GM23248 (cell line): ENCODE measurements at regions of chr14 and their contacts with region 1.

Region 1: DNA sequence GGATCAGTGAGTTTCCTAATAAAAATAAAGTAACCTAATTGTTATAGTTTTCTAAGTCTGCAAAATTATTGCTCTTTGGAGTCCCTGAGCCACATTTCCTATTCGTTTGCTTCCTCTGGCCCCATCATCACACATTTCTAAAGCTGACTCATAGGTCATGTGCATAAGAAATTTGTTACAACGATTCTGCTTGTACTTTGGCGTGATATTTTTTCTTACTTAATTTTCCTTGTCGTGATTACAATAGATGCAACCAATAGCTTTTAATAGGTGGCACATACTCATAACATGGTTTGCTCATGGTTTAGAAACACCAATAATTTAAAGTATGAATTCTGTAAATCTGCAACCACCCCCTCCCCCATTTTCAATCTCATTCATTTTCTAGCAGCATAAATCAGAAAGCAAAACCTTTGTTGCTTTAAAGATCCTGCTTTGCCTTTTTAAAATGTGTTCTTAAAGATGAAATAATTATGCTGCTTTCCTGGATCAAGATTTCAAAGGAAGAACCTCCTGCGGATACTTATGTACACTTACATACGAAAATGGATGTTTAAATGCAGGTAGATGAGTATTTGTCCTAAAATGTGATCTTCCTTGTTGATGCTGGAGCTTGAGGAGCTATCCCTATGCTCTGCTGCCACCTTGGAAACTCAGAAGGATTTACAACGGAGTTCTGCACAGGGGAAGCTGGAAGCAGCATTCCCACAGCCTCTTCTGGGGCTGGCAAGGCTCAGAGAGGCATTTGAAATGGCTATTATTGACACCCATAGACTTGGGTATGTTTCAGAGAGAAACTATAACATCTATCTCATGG is 1.7 kb upstream of the FLRT2 start:
- DNase-seq: peak; percentile 89
- H3K4me3 ChIP-seq: peak overlapping the region; percentile 96
- H3K27ac ChIP-seq: peak overlapping the region; percentile 87
- H3K4me1 ChIP-seq: peaks cover 17% of the 10 kb centered on the region
- H3K27me3 ChIP-seq: no peaks in the 10 kb centered on the region

Region 2: GRCh38 chr14:83909507-83909906 is 1618.8 kb before region 1 on chr14:
- in situ Hi-C with region 1: loop called (anchors 25 kb)
- DNase-seq: no peak
- H3K4me3 ChIP-seq: no peak overlapping the region
- H3K27ac ChIP-seq: no peak overlapping the region
- H3K4me1 ChIP-seq: no peaks in the 10 kb centered on the region
- H3K27me3 ChIP-seq: no peaks in the 10 kb centered on the region

Region 3: GRCh38 chr14:85093631-85094330 is 434.5 kb before region 1 on chr14:
- in situ Hi-C with region 1: no loop called
- DNase-seq: peak; percentile 58
- H3K4me3 ChIP-seq: no peak overlapping the region
- H3K27ac ChIP-seq: no peak overlapping the region
- H3K4me1 ChIP-seq: peaks cover 21% of the 10 kb centered on the region
- H3K27me3 ChIP-seq: no peaks in the 10 kb centered on the region

Region 4: DNA sequence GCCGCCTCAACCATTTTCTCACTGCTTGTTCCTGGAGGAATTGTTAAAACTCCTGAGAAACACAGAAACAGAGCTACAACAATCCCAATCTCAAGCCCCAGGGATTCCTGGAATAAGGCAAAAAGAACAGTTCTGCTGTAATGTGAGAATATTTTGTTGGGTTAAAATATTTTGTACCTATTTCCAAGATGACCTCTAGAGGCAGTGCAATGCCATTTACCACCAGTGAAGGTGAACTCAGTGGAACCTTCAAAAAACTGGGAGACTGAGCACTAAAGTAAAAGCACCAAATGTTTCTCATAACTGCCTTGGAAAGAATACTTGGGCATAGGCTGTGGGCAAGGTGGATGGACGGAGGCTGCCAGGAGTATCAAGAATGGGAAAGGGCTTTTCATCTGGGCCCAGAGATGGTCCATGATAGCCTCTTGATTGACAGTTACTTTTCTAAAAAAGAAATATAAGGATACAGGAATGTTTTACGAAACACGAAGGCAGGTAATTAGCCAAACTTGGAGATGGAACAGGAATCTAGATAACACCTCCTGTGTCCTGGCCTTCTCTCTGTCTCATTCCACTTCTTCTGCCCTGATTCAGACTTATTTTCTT is 332.3 kb before region 1 on chr14:
- in situ Hi-C with region 1: loop called (anchors 10 kb)
- DNase-seq: peak; percentile 47
- H3K4me3 ChIP-seq: no peak overlapping the region
- H3K27ac ChIP-seq: no peak overlapping the region
- H3K4me1 ChIP-seq: no peaks in the 10 kb centered on the region
- H3K27me3 ChIP-seq: no peaks in the 10 kb centered on the region

Region 5: DNA sequence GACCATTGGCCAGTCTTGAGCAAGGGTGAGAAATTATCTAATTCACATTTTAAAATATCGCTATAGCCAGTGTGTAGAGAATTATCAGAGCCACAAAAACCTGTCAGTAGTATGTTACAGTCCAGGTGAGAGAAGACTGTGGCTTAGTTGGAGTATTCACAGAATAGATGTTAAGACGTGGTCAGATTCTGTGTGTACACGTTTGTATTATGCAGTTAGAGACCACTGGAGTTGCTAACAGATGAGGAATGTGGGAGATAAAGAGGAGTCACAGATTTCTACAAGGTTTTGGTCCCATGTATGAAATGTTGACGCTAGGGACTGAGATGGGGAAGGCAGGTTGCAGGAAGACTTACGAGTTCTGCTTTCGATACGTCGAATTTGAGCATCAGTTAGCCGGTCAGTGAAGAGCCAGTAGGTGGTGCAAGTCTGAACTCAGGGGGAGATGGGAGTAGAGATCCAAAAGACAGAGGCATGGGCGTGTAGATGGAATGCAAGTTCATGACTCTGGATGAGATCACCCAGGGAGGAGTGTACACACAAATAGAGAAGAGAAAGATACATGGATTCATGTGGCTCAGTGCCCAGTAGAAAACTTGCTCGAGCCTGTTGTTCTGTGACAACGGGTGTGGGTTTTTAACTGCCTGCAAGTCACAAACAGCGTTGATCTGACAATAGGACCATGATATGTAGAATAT is 113.1 kb before region 1 on chr14:
- in situ Hi-C with region 1: loop called (anchors 10 kb)
- DNase-seq: peak; percentile 97
- H3K4me3 ChIP-seq: peak overlapping the region; percentile 36
- H3K27ac ChIP-seq: peak overlapping the region; percentile 69
- H3K4me1 ChIP-seq: peaks cover 28% of the 10 kb centered on the region
- H3K27me3 ChIP-seq: no peaks in the 10 kb centered on the region